Aorta (tissue), 5 donors: ENCODE measurements at regions of chr3 and their contacts with region 1.

Region 1: DNA sequence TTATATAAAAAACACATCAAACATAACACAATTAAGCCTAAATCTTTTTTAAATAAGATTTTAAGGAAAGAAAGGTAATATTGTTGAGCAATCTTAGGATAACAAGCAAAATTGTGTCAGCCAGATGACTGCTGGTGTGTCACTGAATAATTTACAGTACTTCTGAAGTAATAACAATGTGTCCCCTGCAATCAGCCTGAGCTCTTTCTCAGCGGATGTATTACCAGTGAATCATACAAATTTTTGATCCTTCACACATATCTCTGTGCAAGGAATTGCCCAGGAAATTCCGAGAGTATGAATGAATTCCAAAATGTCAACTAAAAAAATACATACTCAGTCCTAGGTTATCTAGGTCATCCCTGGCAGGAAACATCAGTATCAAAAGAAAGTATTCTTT is 76.6 kb upstream of the PTX3 start:
- DNase-seq: no peak
- ATAC-seq: no peak
- H3K4me3 ChIP-seq: no peak overlapping the region
- H3K27ac ChIP-seq: no peak overlapping the region
- H3K4me1 ChIP-seq: no peaks in the 10 kb centered on the region
- H3K27me3 ChIP-seq: no peaks in the 10 kb centered on the region

Region 2: DNA sequence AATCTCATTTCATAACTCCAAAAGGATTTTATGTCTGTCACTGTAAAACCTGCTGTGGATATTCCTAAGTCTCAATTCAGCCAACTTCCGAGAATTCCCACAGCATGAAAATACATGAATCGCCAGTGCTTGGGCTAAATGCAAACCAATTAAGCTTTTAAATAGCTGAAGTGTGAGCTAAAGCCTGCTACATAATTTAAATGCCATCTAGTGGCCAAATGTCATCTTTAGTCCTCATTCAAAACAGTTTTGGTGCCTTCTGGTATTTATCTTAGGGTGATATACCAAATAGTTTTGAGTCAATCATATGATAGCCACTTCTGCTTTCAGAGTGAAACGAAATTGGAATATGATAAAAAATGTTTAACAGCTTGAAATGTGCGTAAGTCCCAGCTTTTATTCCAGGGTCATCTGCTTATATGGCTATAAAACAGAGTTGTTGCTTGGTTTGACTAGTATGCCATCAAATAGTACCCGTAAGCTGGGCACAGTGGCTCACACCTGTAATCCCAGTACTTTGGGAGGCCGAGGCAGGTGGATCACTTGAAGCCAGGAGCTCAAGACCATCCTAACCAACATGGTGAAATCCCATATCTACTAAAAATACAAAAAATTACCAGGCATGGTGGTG is 158.3 kb before region 1 on chr3:
- intact Hi-C with region 1: no loop called
- DNase-seq: no peak
- ATAC-seq: peak; percentile 57
- H3K4me3 ChIP-seq: no peak overlapping the region
- H3K27ac ChIP-seq: no peak overlapping the region
- H3K4me1 ChIP-seq: no peaks in the 10 kb centered on the region
- H3K27me3 ChIP-seq: no peaks in the 10 kb centered on the region

Region 3: GRCh38 chr3:157305392-157305791 is 54.7 kb before region 1 on chr3:
- intact Hi-C with region 1: loop called in 1 of 2 experiments (anchors 5 kb)
- DNase-seq: no peak
- ATAC-seq: no peak
- H3K4me3 ChIP-seq: no peak overlapping the region
- H3K27ac ChIP-seq: no peak overlapping the region
- H3K4me1 ChIP-seq: no peaks in the 10 kb centered on the region
- H3K27me3 ChIP-seq: no peaks in the 10 kb centered on the region